Activated CD4-positive, alpha-beta memory T cell treated with anti-CD3 and anti-CD28 coated beads for 36 hours (primary cell): ENCODE measurements at regions of chr3 and their contacts with region 1.

Region 1: DNA sequence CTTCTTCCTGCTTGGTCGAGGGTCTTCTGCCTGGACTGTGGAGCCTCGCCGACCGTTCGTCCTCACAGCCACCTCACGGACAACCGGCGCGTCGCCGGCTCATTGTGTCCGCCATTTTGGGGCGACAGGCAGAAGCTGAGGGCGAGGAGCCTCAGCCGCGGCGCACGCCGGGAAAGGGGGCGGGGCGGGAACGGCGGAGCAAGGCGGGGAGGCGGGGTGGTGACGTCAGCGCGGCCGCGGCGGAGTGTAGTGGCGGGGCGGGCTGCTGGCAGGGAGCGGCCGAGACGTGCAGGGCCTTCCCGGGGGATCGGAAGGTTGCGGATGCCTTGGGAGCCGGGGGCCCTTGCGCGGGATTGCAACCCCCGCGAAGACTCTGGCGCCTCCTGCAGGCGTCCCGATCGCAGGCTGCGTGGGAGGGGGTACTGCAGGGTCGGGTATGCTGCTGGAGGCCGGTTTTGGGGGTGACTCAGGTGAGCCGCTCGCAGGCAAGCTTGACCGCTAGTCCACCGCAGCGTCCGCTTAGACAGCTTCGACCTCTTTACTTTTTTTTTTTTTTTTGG is at the start of gene WDR82:
- DNase-seq: peak; percentile 99
- H3K4me3 Mint-ChIP-seq: peak within 1 kb of the TSS; percentile 92
- H3K27ac Mint-ChIP-seq: peak within 1 kb of the TSS; percentile 95
- H3K4me1 Mint-ChIP-seq: peaks cover 54% of the 10 kb centered on the region
- H3K27me3 Mint-ChIP-seq: no peaks in the 10 kb centered on the region
- total RNA-seq, gene WDR82: 110 to 111 TPM

Region 2: DNA sequence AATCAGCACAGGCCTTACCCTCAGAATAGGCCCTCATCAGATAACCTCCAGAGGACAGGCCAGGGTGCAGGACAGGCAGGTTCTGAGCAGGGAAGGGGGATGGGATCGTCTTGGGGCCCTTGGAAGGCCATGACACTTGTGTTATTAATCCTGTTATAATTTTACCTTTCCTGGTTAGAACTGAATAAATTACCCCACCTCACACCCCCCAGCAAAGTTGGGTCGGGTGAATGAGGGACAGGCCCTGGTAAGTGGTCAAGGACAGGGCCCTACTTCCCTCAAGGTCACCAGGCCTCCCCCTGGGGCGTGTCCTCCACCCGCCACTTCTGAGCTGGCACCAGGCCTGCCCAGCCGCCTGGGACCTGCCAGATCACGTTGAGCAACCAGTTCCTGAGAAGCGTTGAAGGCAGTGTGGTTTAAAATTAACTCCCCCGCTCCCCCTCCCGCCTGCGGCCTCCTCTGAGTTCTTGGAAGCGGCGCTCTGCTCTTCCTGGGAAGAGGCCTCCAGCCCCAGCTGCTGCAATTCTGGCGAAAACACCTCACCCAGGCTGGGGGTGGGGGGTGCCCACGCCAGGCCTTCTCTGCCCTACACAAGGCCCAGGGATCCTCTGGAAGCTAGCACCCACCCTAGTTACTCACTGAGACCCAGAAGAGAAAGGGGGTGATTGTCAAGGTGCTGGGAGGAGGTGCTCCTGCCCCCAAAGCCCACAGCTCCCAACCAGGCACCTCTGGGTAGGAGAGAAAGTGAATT is 1677.6 kb before region 1 on chr3:
- CTCF ChIA-PET with region 1: no interaction called
- POLR2A ChIA-PET with region 1: no interaction called
- intact Hi-C with region 1: loop called (anchors 10 kb)
- DNase-seq: peak; percentile 98
- H3K4me3 Mint-ChIP-seq: peak overlapping the region; percentile 98
- H3K27ac Mint-ChIP-seq: peak overlapping the region; percentile 100
- H3K4me1 Mint-ChIP-seq: peaks cover 81% of the 10 kb centered on the region
- H3K27me3 Mint-ChIP-seq: no peaks in the 10 kb centered on the region

Region 3: DNA sequence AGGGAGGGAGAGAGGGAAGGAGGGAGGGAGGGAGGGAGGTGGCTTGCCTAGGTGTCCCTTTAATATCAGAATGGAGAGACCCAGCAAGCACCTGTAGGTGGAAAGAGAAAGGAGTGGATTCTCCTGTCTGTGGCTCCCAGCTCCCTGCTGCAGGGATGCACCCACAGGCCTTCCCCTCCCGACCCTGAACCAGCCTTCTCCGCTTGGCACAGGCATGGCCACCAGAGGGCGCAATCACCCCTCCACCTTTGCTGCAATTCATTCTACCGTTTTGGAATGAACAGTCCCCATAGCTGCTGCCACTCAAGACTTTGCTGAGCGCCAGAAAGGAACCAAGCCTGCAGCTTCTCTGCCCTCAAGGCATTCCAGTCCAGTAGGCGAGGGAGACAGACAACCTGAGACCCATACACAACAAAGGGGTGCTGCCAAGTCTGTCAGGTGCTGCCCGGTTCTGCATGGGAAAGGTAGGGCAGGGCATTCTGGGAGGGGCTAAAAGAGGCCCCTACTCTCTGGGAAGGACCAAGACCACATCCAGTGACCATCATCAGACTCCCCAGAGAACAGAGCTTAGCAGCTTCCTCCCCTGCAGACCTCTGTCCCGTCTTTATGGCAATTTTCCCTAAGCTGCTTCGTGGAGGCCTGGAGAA is 58.1 kb before region 1 on chr3:
- CTCF ChIA-PET with region 1: interaction called, 50 read pairs
- POLR2A ChIA-PET with region 1: interaction called, 5 read pairs
- intact Hi-C with region 1: no loop called
- DNase-seq: peak; percentile 94
- H3K4me3 Mint-ChIP-seq: no peak overlapping the region
- H3K27ac Mint-ChIP-seq: peak overlapping the region; percentile 49
- H3K4me1 Mint-ChIP-seq: peaks cover 83% of the 10 kb centered on the region
- H3K27me3 Mint-ChIP-seq: no peaks in the 10 kb centered on the region

Region 4: DNA sequence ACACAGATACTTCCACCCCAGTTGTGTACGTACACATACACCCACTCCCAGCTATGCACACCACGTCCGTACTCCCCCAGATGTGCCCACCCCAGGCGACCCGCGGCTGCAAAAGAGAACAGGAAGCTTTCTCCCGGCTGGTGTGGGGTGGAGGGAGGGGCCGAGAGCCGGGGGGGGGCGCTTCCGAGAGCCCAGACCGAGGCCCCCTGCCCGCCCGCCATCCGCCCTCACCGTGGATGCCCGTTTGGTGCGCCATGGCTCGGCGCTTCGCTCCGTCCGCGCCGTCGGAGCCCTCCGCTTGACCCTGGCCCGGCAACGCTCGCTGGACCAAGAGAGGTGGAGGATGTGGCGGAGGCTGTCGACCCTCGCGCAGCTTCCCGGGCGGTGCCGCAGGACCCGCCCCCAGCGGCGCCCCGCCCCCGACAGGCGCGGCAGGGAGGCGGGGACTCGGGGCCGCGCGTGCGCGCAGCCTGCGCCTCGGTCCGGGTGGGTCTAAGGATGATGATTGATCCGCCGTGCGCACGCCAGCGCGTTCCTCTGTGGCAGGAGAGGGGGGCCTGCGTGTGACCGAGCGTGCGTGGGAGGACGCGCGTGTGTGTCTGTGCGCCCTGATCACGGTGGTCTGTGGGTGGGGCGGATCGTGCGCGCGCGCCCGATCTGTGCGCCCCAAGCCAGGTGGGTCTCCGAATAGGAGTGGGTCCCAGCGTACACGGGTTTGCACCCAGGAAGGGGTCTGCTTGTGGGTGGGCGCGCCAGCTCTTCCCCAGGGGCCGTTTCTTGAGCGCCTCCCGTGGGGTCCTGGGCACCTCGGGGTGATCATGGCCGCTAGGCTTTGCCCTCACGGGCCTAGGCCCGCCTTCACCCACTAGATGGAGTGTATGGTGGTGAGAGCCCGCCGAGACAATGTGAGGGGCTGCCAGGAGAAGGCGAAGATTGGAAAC is 39.6 kb before region 1 on chr3 and contains the start of gene TWF2:
- CTCF ChIA-PET with region 1: interaction called, 148 read pairs
- POLR2A ChIA-PET with region 1: interaction called, 128 read pairs
- intact Hi-C with region 1: loop called (anchors 1 kb)
- DNase-seq: peak; percentile 90
- H3K4me3 Mint-ChIP-seq: peak within 1 kb of the TSS; percentile 99
- H3K27ac Mint-ChIP-seq: peak within 1 kb of the TSS; percentile 97
- H3K4me1 Mint-ChIP-seq: peaks cover 70% of the 10 kb centered on the region
- H3K27me3 Mint-ChIP-seq: no peaks in the 10 kb centered on the region
- total RNA-seq, gene TWF2: 114 to 118 TPM

Region 5: DNA sequence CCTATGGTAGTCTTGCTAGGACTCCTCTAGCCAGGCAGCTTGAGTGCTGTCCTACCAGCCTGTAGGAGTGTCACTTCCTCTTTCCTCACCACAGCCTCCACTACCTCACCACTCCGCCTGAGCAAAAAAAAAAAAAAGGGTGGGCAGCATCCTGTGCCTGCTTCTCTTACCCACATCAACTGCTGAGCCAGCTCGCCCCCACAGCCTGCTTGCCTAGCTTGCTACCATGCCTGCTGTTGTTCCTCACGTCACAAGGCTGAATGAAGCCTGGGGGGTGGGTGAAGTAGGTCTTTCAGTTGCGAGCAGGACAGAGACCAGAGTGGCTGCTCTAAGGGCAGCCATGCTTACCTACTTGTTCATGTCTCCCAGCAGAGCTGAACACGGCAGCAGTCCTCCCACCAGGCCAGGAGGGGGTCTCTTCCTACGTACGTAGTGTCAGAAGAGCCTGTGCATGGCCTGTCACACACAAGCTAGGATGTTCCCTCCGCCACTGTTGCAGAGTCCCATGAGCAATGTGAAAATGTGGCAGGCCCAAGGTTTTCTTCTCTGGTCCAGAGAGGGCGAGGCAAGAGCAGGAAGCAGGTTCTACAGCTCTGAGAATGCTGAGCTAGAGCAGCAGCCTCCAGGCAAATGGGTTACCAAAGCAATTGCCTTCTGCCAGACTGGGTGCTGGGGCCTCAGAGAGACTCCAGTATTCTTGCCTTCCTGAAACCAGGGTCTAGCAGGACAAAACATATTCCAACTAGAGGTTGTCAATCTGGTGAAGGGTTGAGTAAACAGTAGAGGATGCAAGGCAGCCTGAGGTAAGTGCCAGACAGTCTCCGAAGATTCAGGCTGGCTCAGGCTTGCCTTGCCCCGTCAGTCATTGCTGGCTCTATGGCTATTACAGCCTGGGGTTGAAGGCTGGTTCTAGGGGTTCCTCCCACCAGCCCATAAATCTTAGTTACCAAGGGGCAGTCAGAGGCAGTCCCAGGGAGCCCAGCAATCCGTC is 25.0 kb before region 1 on chr3:
- CTCF ChIA-PET with region 1: interaction called, 27 read pairs
- POLR2A ChIA-PET with region 1: interaction called, 61 read pairs
- intact Hi-C with region 1: loop called (anchors 1 kb)
- DNase-seq: peak; percentile 93
- H3K4me3 Mint-ChIP-seq: peak overlapping the region; percentile 71
- H3K27ac Mint-ChIP-seq: peak overlapping the region; percentile 97
- H3K4me1 Mint-ChIP-seq: peaks cover 88% of the 10 kb centered on the region
- H3K27me3 Mint-ChIP-seq: no peaks in the 10 kb centered on the region

Region 6: DNA sequence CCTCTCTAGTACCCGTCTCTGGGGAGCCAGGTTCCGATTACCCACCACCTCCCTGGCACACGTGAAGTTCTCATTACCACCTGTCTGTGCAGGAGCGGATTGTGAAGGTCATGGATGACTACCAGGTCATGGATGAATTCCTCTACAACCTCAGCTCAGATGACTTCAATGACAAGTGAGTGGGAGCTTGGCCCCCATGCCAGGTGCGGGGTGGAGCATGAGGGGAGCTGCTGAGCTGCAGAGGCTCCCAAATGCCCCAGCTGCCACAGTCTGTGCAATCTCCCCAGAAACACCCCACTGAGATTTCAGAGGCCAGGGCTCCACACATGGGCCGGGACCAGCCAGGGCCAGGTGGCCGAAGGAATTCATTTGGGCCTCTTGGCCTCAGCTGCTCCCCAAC is 71.8 kb after region 1 on chr3:
- CTCF ChIA-PET with region 1: no interaction called
- POLR2A ChIA-PET with region 1: no interaction called
- intact Hi-C with region 1: no loop called
- DNase-seq: no peak
- H3K4me3 Mint-ChIP-seq: no peak overlapping the region
- H3K27ac Mint-ChIP-seq: no peak overlapping the region
- H3K4me1 Mint-ChIP-seq: no peaks in the 10 kb centered on the region
- H3K27me3 Mint-ChIP-seq: no peaks in the 10 kb centered on the region

Region 7: DNA sequence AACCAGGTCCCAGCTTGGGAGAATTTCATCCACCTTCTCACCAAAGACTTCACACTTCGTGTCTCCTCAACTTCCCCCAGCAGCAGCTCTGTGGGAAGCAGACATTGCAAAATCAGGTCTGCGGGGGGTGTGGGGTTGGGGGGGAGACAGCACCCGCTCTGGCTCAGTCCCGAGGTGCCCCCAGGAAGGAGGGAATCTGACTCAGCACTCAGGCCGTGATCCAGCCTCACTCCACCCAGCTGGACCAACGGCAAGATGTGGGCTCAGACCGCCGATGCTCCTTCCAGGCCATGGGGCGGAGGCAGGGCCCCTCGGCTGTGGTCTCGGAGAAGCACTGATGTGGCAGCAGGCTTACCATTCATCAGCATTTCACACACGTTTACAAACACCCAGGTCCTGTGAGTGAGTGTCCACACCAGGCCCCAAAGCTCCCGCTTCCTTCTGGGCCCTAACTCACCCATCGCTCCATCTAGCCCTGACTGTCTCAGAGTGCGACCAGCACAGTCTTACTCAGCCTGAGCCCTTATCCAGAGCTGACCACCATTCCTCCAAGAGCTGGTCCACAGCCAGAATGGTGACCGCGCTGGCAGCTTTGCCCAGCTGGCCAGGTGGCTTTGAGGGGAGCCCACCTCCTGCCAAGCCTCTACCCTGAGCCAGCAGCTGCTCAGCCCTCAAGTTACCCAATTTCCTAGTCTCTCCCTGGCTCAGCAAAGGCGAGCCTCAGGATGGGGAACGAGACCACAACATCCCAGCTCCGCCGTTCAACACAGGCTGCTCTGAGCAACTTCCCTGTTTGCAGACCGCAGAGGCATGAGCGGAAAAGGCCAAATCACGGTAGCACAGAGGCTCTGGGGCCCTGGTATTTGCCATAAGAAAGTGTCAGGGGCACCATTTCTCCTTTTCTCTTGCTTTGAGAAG is 219.8 kb after region 1 on chr3:
- CTCF ChIA-PET with region 1: no interaction called
- POLR2A ChIA-PET with region 1: no interaction called
- intact Hi-C with region 1: no loop called
- DNase-seq: no peak
- H3K4me3 Mint-ChIP-seq: no peak overlapping the region
- H3K27ac Mint-ChIP-seq: no peak overlapping the region
- H3K4me1 Mint-ChIP-seq: no peaks in the 10 kb centered on the region
- H3K27me3 Mint-ChIP-seq: no peaks in the 10 kb centered on the region

Region 8: GRCh38 chr3:52536369-52537164 is 258.0 kb after region 1 on chr3 and contains the start of gene UQCC5:
- CTCF ChIA-PET with region 1: no interaction called
- POLR2A ChIA-PET with region 1: no interaction called
- intact Hi-C with region 1: loop called (anchors 10 kb)
- DNase-seq: peak; percentile 99
- H3K4me3 Mint-ChIP-seq: peak within 1 kb of the TSS; percentile 92
- H3K27ac Mint-ChIP-seq: peak within 1 kb of the TSS; percentile 92
- H3K4me1 Mint-ChIP-seq: peaks cover 41% of the 10 kb centered on the region
- H3K27me3 Mint-ChIP-seq: no peaks in the 10 kb centered on the region
- total RNA-seq, gene UQCC5: 12.9 to 13.3 TPM